PC-3 (cell line): ENCODE measurements at regions of chr2 and their contacts with region 1.

Region 1: GRCh38 chr2:137220438-137220993 is 455.2 kb downstream of the THSD7B start:
- DNase-seq: peak; percentile 94
- ATAC-seq: peak; percentile 81
- H3K4me3 ChIP-seq: no peak overlapping the region
- H3K27ac ChIP-seq: no peak overlapping the region
- H3K4me1 ChIP-seq: 0 out of 2 replicates have a peak, but pooled peaks cover 6% of the 10 kb centered on the region
- H3K27me3 ChIP-seq: no peaks in the 10 kb centered on the region
- CTCF ChIP-seq: no peak

Region 2: DNA sequence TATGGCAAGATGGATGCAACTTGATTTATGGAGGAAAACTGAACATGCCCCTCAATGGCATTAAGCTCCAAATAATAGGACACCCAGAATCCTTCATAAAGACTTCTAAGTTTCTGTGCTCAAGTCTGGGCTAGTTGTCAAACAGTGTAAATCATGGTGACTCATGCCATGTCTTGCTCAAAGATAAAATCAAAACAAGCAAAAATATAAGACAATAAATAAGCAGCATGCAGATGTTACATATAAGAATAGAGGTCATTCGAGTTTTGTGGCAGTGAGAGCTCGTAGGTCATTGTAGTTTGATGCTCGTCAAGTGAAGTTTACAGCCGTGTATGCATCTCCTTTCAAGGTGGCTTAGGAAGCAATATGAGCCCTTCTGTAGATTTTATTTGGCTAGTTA is 51.9 kb before region 1 on chr2:
- CTCF ChIA-PET with region 1: no interaction called
- POLR2A ChIA-PET with region 1: no interaction called
- intact Hi-C with region 1: loop called (anchors 2 kb)
- DNase-seq: peak; percentile 77
- ATAC-seq: peak; percentile 82
- H3K4me3 ChIP-seq: no peak overlapping the region
- H3K27ac ChIP-seq: no peak overlapping the region
- H3K4me1 ChIP-seq: peaks cover 23% of the 10 kb centered on the region
- H3K27me3 ChIP-seq: no peaks in the 10 kb centered on the region
- CTCF ChIP-seq: no peak

Region 3: GRCh38 chr2:137237055-137237454 is 16.5 kb after region 1 on chr2:
- CTCF ChIA-PET with region 1: no interaction called
- POLR2A ChIA-PET with region 1: no interaction called
- intact Hi-C with region 1: no loop called
- DNase-seq: peak; percentile 19
- ATAC-seq: no peak; the same call in 1 of the 2 replicates
- H3K4me3 ChIP-seq: no peak overlapping the region
- H3K27ac ChIP-seq: no peak overlapping the region
- H3K4me1 ChIP-seq: peaks cover 16% of the 10 kb centered on the region
- H3K27me3 ChIP-seq: no peaks in the 10 kb centered on the region
- CTCF ChIP-seq: no peak